B cell (primary cell): ENCODE measurements at regions of chr10 and their contacts with region 1.

Region 1: GRCh38 chr10:93859049-93859655 is 34.6 kb upstream of the SLC35G1 start:
- DNase-seq: peak; percentile 18
- ATAC-seq: no peak
- H3K4me3 ChIP-seq: no peak overlapping the region
- H3K4me3 Mint-ChIP-seq: no peak overlapping the region
- H3K27ac ChIP-seq: no peak overlapping the region
- H3K27ac Mint-ChIP-seq: no peak overlapping the region
- H3K4me1 ChIP-seq: no peaks in the 10 kb centered on the region
- H3K4me1 Mint-ChIP-seq: no peaks in the 10 kb centered on the region
- H3K27me3 ChIP-seq: no peaks in the 10 kb centered on the region
- H3K27me3 Mint-ChIP-seq: peaks cover 9% of the 10 kb centered on the region
- CTCF ChIP-seq: peak; percentile 67

Region 2: GRCh38 chr10:93604146-93604545 is 255.0 kb before region 1 on chr10:
- CTCF ChIA-PET with region 1: no interaction called
- POLR2A ChIA-PET with region 1: no interaction called
- intact Hi-C with region 1: no loop called
- DNase-seq: no peak
- ATAC-seq: no peak
- H3K4me3 ChIP-seq: no peak overlapping the region
- H3K4me3 Mint-ChIP-seq: no peak overlapping the region
- H3K27ac ChIP-seq: no peak overlapping the region
- H3K27ac Mint-ChIP-seq: no peak overlapping the region
- H3K4me1 ChIP-seq: no peaks in the 10 kb centered on the region
- H3K4me1 Mint-ChIP-seq: peaks cover 1% of the 10 kb centered on the region
- H3K27me3 ChIP-seq: peaks cover 0 to 19% (median 7%) of the 10 kb centered on the region in 4 experiments
- H3K27me3 Mint-ChIP-seq: peaks cover 61% of the 10 kb centered on the region
- CTCF ChIP-seq: no peak

Region 3: DNA sequence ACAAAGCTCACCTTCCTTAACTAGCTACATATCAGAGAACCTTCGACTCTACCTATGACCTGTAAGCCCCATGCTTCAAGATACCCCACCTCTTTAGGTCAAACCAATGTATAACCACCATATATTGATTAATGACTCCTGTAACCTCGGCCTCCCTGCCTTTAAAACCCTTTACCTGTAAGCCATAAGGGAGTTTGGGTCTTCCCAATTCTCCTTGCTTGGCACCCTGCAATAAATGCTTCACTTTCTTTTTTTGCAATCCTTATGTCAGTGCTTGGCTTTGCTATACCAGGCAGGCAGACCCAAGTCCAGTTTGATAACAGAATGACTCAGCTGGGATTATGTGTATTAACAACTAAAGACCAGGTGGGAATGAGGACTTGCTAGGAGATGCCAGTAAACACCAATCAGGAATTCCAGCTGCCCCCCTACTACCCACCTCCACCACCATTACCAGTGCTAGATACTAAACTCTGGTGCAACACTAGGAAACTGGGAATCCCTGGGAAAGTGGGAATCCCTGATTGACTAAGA is 12.6 kb after region 1 on chr10:
- CTCF ChIA-PET with region 1: interaction called, 11 read pairs
- POLR2A ChIA-PET with region 1: no interaction called
- intact Hi-C with region 1: no loop called
- DNase-seq: no peak
- ATAC-seq: no peak
- H3K4me3 ChIP-seq: no peak overlapping the region
- H3K4me3 Mint-ChIP-seq: no peak overlapping the region
- H3K27ac ChIP-seq: no peak overlapping the region
- H3K27ac Mint-ChIP-seq: no peak overlapping the region
- H3K4me1 ChIP-seq: no peaks in the 10 kb centered on the region
- H3K4me1 Mint-ChIP-seq: no peaks in the 10 kb centered on the region
- H3K27me3 ChIP-seq: peaks cover 0 to 14% (median 6%) of the 10 kb centered on the region in 4 experiments
- H3K27me3 Mint-ChIP-seq: peaks cover 45% of the 10 kb centered on the region
- CTCF ChIP-seq: no peak

Region 4: GRCh38 chr10:93980486-93980885 is 121.3 kb after region 1 on chr10:
- CTCF ChIA-PET with region 1: no interaction called
- POLR2A ChIA-PET with region 1: no interaction called
- intact Hi-C with region 1: no loop called
- DNase-seq: no peak
- ATAC-seq: no peak
- H3K4me3 ChIP-seq: no peak overlapping the region
- H3K4me3 Mint-ChIP-seq: no peak overlapping the region
- H3K27ac ChIP-seq: no peak overlapping the region
- H3K27ac Mint-ChIP-seq: no peak overlapping the region
- H3K4me1 ChIP-seq: no peaks in the 10 kb centered on the region
- H3K4me1 Mint-ChIP-seq: no peaks in the 10 kb centered on the region
- H3K27me3 ChIP-seq: peaks cover 0 to 4% (median 0%) of the 10 kb centered on the region in 4 experiments
- H3K27me3 Mint-ChIP-seq: peaks cover 23% of the 10 kb centered on the region
- CTCF ChIP-seq: no peak